Activated T-helper 1 cell treated with anti-CD3 and anti-CD28 coated beads, Interleukin-12 subunit alpha, Interleukin-12 subunit beta, Interleukin-2, Interleukin-4 antibody, amounts not matched to agents 30 ng/mL and 10 ng/mL and 1 ng/mL, durations not matched to agents 14 hours and 24 hours and 36 hours (primary cell): ENCODE measurements at regions of chr13 and their contacts with region 1.

Region 1: GRCh38 chr13:41554626-41555386 is 97.5 kb downstream of the RGCC start:
- DNase-seq: peak; percentile 16
- H3K4me3 Mint-ChIP-seq: no peak overlapping the region
- H3K27ac Mint-ChIP-seq: peak overlapping the region; percentile 30
- H3K4me1 Mint-ChIP-seq: peaks cover 21% of the 10 kb centered on the region
- H3K27me3 Mint-ChIP-seq: no peaks in the 10 kb centered on the region

Region 2: GRCh38 chr13:41352935-41353840 is 201.6 kb before region 1 on chr13:
- intact Hi-C with region 1: loop called (anchors 2 kb)
- DNase-seq: peak; percentile 47
- H3K4me3 Mint-ChIP-seq: no peak overlapping the region
- H3K27ac Mint-ChIP-seq: peak overlapping the region; percentile 24
- H3K4me1 Mint-ChIP-seq: peaks cover 38% of the 10 kb centered on the region
- H3K27me3 Mint-ChIP-seq: no peaks in the 10 kb centered on the region

Region 3: DNA sequence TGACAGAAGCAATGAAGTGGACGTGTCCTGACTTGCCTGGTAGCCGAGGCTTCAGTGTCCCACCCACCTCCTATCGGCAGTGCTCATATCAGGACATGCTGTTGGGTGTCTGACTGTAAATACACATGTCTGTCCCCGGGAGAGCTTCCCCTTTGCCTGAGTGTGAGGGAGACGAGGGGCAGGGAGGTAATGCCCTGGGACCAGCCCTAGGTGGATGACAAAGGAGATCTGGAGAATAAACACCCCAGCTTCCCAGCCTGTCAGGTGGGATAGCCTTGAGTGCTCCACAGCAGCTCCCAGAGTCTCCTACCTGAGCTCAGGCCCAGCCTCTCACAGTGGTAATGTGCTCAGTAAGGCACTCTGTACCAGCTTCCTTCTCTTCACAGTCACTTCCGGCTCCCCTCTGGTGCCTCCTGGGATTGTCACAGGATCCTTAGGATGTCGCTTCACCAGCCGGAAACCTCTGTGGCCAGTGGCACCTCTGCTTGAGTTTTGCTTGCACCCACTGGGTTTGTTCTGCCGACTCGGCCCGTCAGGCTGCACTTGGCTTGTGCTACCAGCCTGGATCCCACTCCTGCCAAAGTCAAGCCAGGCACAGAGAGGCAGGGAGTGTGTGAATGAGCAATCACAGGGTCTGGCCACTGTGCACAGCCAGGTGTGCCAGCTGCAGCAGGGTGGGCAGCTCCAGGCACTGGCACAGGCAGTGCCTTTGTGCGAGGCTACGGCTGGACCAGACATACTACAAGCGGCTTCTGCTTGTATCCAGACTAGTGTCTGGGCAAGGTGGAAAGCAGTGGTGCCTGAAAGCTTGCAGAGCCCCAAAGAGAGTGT is 151.9 kb before region 1 on chr13:
- intact Hi-C with region 1: loop called (anchors 2 kb)
- DNase-seq: no peak
- H3K4me3 Mint-ChIP-seq: no peak overlapping the region
- H3K27ac Mint-ChIP-seq: no peak overlapping the region
- H3K4me1 Mint-ChIP-seq: no peaks in the 10 kb centered on the region
- H3K27me3 Mint-ChIP-seq: no peaks in the 10 kb centered on the region

Region 4: DNA sequence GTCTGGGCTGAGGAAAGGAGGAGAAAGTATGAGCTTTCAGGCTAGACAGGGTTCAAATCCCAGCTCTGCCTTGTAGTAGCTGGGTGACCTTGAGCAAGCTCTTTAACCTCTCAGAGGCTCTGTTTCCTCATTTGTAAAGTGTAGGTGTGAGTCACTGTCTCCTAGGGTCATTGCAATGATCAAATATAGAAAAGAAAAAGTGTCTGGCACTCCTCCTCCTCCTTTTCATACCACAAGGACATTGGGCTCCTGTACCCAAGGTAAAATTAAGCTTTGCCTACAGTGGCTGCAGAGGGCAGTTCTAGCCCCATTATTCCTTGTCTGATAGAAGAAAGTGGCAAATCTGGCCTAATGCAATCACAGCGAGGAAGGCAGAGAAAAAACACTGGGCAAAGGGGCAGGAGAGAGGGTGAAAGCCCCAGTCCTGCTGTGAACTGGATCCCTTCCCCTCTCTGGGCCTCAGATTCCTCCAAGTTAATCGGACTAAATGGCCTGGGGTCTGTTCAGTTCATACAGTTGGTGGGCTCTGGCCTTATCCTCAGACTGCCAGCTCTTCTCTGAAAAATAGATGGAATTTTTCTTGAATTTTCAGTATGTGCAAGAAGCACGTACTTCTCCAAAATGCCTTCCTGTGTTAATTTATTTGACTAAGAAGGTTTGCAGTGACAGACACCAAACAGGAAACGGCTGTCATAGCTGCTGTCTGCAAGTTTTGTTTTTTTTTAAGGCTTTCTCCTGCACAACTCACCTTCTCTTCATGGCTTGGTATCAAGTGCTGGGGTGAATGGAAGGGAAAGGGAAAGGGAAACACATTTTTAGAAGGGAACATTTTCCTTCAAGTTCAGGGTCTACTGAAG is 62.2 kb before region 1 on chr13:
- intact Hi-C with region 1: loop called (anchors 1 kb)
- DNase-seq: peak; percentile 22
- H3K4me3 Mint-ChIP-seq: peak overlapping the region; percentile 60
- H3K27ac Mint-ChIP-seq: peak overlapping the region; percentile 76
- H3K4me1 Mint-ChIP-seq: peaks cover 81% of the 10 kb centered on the region
- H3K27me3 Mint-ChIP-seq: no peaks in the 10 kb centered on the region

Region 5: DNA sequence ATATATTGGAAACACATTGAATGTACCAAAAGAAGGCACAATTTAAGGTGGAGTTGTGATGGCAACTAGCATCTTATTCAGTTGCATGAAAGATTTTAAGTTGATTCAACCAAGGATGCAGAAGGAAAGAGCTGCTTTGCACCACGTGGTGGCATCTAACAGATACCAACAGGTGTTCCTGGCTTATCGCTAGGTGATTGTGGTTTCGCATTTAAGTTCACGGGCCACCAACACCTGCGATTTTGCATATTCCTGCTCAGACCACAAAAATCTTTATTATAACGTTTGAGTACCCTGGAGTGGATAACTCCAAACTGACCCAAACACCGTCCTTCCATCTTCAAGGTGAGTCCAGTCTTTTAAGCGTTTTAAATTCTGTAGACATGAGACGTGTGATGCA is 52.1 kb before region 1 on chr13:
- intact Hi-C with region 1: loop called (anchors 1 kb)
- DNase-seq: no peak
- H3K4me3 Mint-ChIP-seq: no peak overlapping the region
- H3K27ac Mint-ChIP-seq: no peak overlapping the region
- H3K4me1 Mint-ChIP-seq: peaks cover 58% of the 10 kb centered on the region
- H3K27me3 Mint-ChIP-seq: peaks cover 2% of the 10 kb centered on the region

Region 6: GRCh38 chr13:41649659-41650058 is 94.9 kb after region 1 on chr13:
- intact Hi-C with region 1: no loop called
- DNase-seq: no peak
- H3K4me3 Mint-ChIP-seq: no peak overlapping the region
- H3K27ac Mint-ChIP-seq: no peak overlapping the region
- H3K4me1 Mint-ChIP-seq: peaks cover 22% of the 10 kb centered on the region
- H3K27me3 Mint-ChIP-seq: no peaks in the 10 kb centered on the region